Endothelial cell of umbilical vein (primary cell): ENCODE measurements at regions of chr13 and their contacts with region 1.

Region 1: DNA sequence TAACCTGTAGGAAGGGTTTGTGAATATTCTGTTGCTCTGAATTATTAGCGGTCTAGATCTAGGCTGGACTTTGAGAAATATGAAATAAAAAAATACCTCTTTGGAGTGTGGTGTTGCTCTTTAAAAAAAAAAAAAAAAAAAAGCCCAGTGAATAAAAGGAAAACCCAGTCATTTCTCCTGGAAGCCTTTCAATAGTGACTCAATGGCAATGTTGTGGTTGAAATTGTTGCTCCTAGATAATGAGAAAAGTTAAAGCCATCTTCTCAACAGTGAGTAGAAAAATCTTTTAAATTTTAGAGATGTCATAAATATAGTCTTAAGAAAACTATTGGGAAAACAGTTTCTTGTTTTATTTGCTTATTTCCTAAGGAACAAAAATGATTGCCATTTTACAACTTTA is 135.3 kb downstream of the RFC3 start:
- DNase-seq: peak; percentile 13
- H3K4me3 ChIP-seq: no peak overlapping the region
- H3K27ac ChIP-seq: no peak overlapping the region
- H3K4me1 ChIP-seq: no peaks in the 10 kb centered on the region
- H3K27me3 ChIP-seq: no peaks in the 10 kb centered on the region
- CTCF ChIP-seq: no peak
- POLR2A ChIP-seq: no peak

Region 2: GRCh38 chr13:33999811-34000605 is 46.8 kb after region 1 on chr13:
- CTCF ChIA-PET with region 1: no interaction called
- POLR2A ChIA-PET with region 1: no interaction called
- dilution Hi-C with region 1: no loop called
- intact Hi-C with region 1: loop called (anchors 10 kb)
- DNase-seq: no peak
- H3K4me3 ChIP-seq: no peak overlapping the region
- H3K27ac ChIP-seq: no peak overlapping the region
- H3K4me1 ChIP-seq: no peaks in the 10 kb centered on the region
- H3K27me3 ChIP-seq: no peaks in the 10 kb centered on the region
- CTCF ChIP-seq: no peak
- POLR2A ChIP-seq: no peak